ENCODE measurements at regions of chr19 and their contacts with region 1.

Region 1: DNA sequence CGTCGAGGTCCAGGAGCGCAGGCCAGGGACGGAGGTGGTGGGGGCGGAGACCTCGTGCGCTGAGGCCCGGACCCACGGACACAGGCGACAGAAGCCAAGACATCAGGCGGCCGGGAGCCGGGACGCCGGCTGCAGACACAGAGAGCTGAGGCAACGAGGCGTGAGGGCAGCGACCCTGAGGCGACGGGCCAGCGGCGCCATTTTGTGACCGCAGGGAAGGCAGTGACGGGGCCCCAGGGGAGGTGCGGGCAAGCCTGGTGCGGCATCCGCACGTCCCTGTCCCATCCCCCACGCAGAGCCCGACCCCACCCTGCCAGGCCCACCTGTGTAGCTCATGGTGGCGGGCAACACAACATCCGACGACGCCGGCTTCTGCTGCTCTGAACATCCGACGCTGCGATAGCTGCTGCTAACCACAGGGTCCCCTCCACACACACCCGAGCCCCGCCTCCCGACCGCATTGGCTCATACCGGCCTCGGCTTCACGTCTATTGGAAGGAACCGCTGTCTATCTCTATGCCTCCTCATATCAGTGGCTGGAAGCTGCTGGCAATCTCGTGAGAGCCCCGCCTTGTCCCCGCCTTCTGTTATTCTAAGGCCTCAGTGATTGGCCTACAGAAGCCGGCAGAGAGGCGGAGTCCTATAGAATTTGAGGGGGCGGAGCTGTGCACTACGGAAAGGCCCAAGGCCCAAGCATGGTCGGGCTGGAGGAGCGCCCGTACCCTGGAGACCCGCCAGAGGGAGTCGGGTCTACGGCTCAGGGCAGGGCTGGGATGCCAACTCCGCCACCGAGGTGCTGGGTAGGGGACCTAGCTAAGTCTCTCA is at the start of gene AKAP8L:
- DNase-seq: peak; percentile 99
- H3K4me3 Mint-ChIP-seq: peak within 1 kb of the TSS; percentile 99
- H3K27ac Mint-ChIP-seq: peak within 1 kb of the TSS; percentile 99
- H3K4me1 Mint-ChIP-seq: peaks cover 33% of the 10 kb centered on the region
- H3K27me3 Mint-ChIP-seq: no peaks in the 10 kb centered on the region
- total RNA-seq, gene AKAP8L: 76.6 and 87.4 TPM in 2 replicates

Region 2: DNA sequence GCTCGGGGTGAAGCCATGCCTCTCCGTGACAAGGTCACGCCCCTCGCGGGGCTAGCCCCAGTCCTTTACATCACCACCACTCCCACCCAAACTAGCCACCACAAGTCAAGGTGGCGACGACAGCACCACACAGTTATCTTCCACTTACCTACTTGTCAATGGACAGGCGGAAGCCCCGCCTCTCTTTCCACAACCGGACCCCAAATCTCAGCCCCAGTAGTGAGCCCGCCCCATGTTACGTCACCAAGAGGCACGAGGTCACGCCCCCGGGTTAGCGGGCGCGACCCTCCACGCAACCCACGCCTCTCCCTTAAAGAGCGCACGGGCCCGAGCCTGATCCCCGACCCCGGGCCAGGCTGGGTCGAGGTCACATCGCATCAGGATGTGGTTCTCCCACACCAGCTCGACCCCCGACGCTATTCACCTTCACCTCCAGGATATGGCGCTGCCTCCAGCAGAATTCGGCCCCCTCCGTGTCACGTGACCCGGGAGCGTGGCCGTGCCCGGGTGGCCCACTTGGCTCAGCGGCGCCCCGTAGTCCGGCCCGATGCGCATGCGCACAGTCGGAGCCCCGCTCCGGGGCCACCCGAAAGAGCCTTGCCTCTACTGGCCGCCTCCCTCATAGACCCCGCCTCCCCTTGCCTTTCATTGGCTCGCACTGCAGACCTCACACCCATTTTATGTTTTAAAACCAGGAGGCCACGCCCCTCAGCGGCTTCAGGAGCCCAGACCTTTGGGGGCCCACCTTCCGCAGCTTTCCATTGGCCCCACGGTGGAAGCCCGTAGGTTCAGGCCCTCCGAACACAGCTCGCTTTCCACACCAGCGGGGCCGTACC is 293.4 kb before region 1 on chr19:
- intact Hi-C with region 1: loop called (anchors 5 kb)
- DNase-seq: peak; percentile 97
- H3K4me3 Mint-ChIP-seq: peak overlapping the region; percentile 99
- H3K27ac Mint-ChIP-seq: peak overlapping the region; percentile 99
- H3K4me1 Mint-ChIP-seq: peaks cover 26% of the 10 kb centered on the region
- H3K27me3 Mint-ChIP-seq: no peaks in the 10 kb centered on the region

Region 3: GRCh38 chr19:15177269-15178116 is 241.3 kb before region 1 on chr19:
- intact Hi-C with region 1: loop called (anchors 1 kb)
- DNase-seq: peak; percentile 73
- H3K4me3 Mint-ChIP-seq: peak overlapping the region; percentile 2
- H3K27ac Mint-ChIP-seq: no peak overlapping the region
- H3K4me1 Mint-ChIP-seq: peaks cover 4% of the 10 kb centered on the region
- H3K27me3 Mint-ChIP-seq: peaks cover 8% of the 10 kb centered on the region

Region 4: DNA sequence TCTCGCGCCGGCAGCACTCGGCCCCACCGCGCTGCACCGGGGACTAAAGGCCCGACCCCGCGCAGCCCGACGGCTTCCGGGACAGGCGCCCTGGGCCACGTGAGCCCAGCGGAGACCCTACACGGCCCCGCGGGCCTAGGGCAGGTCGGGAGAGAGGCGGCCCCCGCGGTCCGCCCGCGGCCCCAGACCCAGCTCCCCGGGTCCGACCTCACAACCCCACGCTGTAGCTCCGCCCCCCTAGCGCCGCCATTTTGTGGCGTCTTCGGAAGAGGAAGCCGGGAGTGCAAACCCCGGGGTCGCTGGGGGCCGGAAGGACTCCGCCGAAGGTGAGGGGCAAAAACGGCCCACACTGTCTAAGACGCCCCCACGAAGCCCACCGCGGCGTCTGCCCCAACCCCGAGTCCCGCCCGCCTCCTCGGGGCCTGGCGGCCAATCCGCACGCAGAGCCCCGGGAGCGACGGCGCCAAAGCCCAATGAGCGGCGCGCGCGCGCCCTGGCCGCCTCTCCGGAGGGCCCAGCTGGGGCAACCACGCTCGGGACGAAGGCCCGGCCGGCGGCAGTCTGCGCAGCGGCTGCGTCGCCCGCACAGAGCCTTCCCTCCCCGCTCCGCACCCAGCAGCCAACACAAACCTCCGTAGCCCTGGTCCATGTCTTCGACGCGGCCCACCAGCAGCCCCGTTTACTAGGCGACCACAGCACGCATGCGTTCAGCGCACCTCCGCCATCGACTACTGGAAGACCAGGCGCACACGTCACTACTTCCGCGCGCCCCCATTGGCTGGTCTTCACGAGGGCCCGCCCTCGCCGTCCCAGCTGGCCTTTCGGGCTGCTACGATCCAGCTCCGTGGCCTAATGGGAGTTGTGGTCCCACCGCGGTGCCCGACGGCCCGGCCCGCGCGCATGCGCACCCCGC is 39.5 kb before region 1 on chr19 and contains the start of gene AKAP8:
- intact Hi-C with region 1: loop called (anchors 1 kb)
- DNase-seq: peak; percentile 98
- H3K4me3 Mint-ChIP-seq: peak within 1 kb of the TSS; percentile 98
- H3K27ac Mint-ChIP-seq: peak within 1 kb of the TSS; percentile 100
- H3K4me1 Mint-ChIP-seq: peaks cover 30% of the 10 kb centered on the region
- H3K27me3 Mint-ChIP-seq: no peaks in the 10 kb centered on the region
- total RNA-seq, gene AKAP8: 56.0 and 62.1 TPM in 2 replicates

Region 5: GRCh38 chr19:15432629-15433518 is 14.1 kb after region 1 on chr19:
- intact Hi-C with region 1: loop called (anchors 1 kb)
- DNase-seq: peak; percentile 94
- H3K4me3 Mint-ChIP-seq: peak overlapping the region; percentile 97
- H3K27ac Mint-ChIP-seq: peak overlapping the region; percentile 93
- H3K4me1 Mint-ChIP-seq: peaks cover 21% of the 10 kb centered on the region
- H3K27me3 Mint-ChIP-seq: no peaks in the 10 kb centered on the region

Measured in activated T-helper 2 cell treated with anti-CD3 and anti-CD28 coated beads, Interferon-gamma antibody, Interleukin-2, Interleukin-4, amounts not matched to agents 10 μg/mL and 5 μg/mL and 100 μg/mL, durations not matched to agents 14 hours and 24 hours and 36 hours (primary cell).